ENCODE measurements at regions of chr19 and their contacts with region 1.

Region 1: DNA sequence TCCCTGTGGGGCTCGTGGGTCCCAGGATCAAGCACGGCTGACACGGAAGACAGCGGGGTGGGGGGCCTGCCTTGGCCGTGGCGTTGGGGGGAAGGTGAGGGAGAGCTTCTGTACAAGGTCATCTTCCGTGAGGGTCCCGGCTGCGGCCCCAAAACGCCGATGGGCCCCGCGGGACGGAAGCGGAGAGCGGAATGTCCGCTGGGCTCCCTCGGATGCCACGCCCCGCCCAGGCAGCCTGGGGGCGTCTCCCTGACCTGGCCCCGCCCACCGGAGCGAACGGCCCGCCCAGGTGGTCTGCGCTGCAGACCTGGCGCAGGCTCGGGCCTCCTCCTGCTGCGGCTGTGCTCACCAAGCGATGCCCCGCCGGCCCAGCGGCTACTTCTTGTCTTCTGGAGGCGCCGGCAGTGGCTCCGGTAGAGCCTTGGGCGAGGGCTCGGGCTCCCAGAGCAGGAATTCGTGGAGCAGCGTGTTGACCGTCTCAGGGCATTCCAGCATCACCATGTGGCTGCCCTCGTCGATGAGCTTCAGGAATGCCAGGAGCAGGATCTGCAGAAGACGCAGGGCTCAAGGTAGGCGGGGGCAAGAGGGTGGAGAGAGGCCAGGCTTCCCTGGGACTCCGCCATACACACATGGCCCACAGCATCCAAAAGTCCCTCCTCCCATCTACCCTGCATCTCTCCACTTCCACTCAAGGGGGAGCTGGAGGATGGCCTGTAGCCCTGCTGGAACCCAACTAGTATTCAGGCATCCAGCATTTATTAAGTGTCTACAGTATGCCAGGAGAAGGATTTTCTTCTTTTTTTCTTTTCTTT is 10.7 kb downstream of the ABHD8 start:
- DNase-seq: peak; percentile 74
- H3K4me3 Mint-ChIP-seq: peak overlapping the region; percentile 87
- H3K27ac Mint-ChIP-seq: peak overlapping the region; percentile 78
- H3K4me1 Mint-ChIP-seq: peaks cover 8% of the 10 kb centered on the region
- H3K27me3 Mint-ChIP-seq: no peaks in the 10 kb centered on the region

Region 2: GRCh38 chr19:17255150-17255621 is 37.3 kb before region 1 on chr19:
- intact Hi-C with region 1: no loop called
- DNase-seq: no peak
- H3K4me3 Mint-ChIP-seq: no peak overlapping the region
- H3K27ac Mint-ChIP-seq: no peak overlapping the region
- H3K4me1 Mint-ChIP-seq: no peaks in the 10 kb centered on the region
- H3K27me3 Mint-ChIP-seq: peaks cover 2% of the 10 kb centered on the region

Region 3: DNA sequence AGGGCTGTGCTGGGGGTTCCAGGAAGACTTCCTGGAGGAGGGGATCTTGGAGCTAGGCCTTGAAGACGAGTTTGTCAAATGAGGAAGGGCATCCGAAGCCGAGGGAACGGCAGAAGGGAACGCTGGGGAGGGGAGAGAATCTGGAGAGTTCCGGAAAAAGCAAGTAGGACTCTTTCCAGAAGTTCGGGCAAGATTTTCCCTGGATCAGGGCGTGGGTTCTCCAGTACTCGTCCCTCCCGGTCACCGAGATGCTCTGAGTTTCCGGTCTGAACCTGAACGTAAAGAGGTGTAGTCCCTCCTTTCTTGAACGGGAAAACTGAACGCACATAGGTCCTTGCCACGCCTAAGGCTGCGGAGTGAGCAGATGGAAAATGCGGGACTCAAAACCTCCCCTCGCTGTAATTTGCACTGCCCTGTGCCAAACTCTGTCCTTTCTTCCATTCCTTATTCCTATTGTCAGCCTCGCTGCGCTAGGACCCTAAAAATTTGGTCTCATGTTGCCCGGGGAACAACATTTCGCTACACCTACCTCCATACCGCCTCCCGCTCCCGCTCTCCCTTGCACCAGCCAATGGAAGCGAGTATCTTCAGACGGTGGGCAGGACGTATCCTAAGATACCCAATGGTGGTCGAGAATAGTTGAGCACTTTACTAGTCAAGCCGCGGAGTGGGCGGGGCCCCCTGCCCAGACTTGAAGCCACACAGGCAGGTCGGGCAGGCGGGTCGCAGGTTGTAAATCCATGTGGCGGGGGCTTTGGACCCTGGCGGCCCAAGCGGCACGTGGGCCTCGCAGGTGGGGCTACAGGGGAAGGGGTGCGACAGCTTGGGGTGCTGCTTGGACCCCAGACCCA is 44.6 kb after region 1 on chr19 and contains the start of gene GTPBP3:
- intact Hi-C with region 1: loop called (anchors 5 kb)
- DNase-seq: peak; percentile 96
- H3K4me3 Mint-ChIP-seq: peak within 1 kb of the TSS; percentile 84
- H3K27ac Mint-ChIP-seq: peak within 1 kb of the TSS; percentile 89
- H3K4me1 Mint-ChIP-seq: peaks cover 15% of the 10 kb centered on the region
- H3K27me3 Mint-ChIP-seq: no peaks in the 10 kb centered on the region
- total RNA-seq, gene GTPBP3: 62.5 and 66.5 TPM in 2 replicates

Region 4: GRCh38 chr19:17448131-17448967 is 155.9 kb after region 1 on chr19 and contains the start of gene TMEM221:
- intact Hi-C with region 1: no loop called
- DNase-seq: peak; percentile 30
- H3K4me3 Mint-ChIP-seq: no peak within 1 kb of the TSS
- H3K27ac Mint-ChIP-seq: no peak within 1 kb of the TSS
- H3K4me1 Mint-ChIP-seq: peaks cover 13% of the 10 kb centered on the region
- H3K27me3 Mint-ChIP-seq: peaks cover 15% of the 10 kb centered on the region
- total RNA-seq, gene TMEM221: not detected in 2 replicates

Measured in activated T-helper 2 cell treated with anti-CD3 and anti-CD28 coated beads, Interferon-gamma antibody, Interleukin-2, Interleukin-4, amounts not matched to agents 10 μg/mL and 5 μg/mL and 100 μg/mL, durations not matched to agents 14 hours and 24 hours and 36 hours (primary cell).